Esophagus squamous epithelium (tissue), 5 donors: ENCODE measurements at regions of chr11 and their contacts with region 1.

Region 1: DNA sequence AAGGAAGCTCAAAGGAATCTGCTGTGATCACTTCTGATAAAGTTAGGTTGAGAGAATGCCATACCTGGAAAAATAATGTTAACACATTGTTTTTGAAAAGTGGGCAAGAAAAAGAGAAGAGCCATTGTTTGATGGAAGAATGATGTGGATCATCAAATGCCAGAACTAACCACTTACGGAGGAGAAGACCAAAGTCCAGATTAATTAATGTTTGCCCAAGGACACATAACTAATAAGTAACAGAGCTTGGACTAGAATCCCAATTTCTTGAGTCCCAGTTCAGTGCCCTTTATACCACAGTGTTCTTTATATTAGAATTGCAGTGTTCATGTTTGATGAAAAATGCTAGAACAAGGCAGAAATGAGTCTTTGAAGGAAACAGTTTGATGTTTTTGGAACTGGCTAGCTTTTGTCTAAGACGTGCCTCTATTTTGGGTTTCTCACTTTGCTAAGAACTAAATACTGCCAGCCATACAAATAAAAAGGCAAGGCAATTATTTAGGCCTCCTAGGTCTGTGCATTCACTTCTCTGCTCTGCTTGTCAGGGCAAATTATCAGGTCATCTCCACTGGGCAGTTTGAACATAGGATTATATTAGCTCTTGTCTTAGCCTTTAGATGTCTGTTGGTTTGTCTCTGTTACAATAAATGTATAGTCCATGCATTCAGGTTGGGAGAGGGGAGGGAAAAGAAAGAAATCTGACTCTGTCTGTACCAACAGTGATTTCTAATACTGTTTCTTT is 72.3 kb downstream of the TRIM44 start:
- DNase-seq: no peak
- H3K4me3 ChIP-seq: no peak overlapping the region
- H3K27ac ChIP-seq: no peak overlapping the region
- H3K4me1 ChIP-seq: no peaks in the 10 kb centered on the region
- H3K27me3 ChIP-seq: no peaks in the 10 kb centered on the region
- CTCF ChIP-seq: no peak
- POLR2A ChIP-seq: no peak

Region 2: DNA sequence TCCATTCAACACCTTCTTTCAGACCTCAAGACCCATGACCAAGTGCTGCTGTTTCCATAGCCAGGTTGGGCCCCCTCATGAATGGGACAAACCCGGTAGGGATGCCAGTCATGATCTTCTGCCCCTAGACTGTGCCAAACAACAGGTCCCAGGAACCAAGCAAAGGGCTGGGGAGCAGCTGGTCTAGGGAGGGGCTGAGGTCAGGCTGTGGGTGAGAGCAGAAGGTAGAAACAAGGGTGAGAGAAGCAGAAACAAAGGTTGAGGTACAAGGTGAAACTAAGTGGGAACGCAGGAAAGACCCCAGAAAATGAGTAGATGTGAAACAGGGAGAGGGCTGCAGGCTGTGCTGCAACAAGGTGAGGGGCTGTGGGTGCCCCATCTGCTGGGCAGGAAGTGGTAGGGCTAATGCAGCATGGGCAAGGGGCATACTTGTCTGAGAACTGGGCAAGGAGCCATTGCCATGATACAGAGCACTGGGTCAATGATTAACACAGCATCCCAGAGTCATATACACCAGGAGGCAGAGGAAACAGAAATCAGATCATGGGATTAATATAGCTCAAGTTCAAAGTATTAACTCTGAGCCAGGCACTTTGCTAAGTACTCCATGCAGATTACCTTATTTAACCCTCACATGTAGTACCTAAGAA is 361.4 kb before region 1 on chr11:
- intact Hi-C with region 1: no loop called
- DNase-seq: no peak
- H3K4me3 ChIP-seq: no peak overlapping the region
- H3K27ac ChIP-seq: no peak overlapping the region
- H3K4me1 ChIP-seq: no peaks in the 10 kb centered on the region
- H3K27me3 ChIP-seq: no peaks in the 10 kb centered on the region
- CTCF ChIP-seq: no peak
- POLR2A ChIP-seq: no peak

Region 3: GRCh38 chr11:36034551-36035331 is 299.9 kb after region 1 on chr11:
- intact Hi-C with region 1: loop called (anchors 5 kb)
- DNase-seq: no peak
- H3K4me3 ChIP-seq: no peak overlapping the region
- H3K27ac ChIP-seq: no peak overlapping the region
- H3K4me1 ChIP-seq: peaks cover 0 to 34% (median 0%) of the 10 kb centered on the region in 3 donors
- H3K27me3 ChIP-seq: no peaks in the 10 kb centered on the region
- CTCF ChIP-seq: no peak
- POLR2A ChIP-seq: no peak